ENCODE measurements at regions of chr18 and their contacts with region 1.

Region 1: GRCh38 chr18:58529714-58530354 is 99.1 kb downstream of the ALPK2 start:
- DNase-seq: peak; percentile 40 to 82 (median 72)
- ATAC-seq: peak; percentile 95
- H3K4me3 ChIP-seq: no peak overlapping the region
- H3K4me3 Mint-ChIP-seq: no peak overlapping the region
- H3K27ac ChIP-seq: no peak overlapping the region
- H3K27ac Mint-ChIP-seq: no peak overlapping the region
- H3K4me1 ChIP-seq: no peaks in the 10 kb centered on the region
- H3K4me1 Mint-ChIP-seq: peaks cover 4% of the 10 kb centered on the region
- H3K27me3 ChIP-seq: no peaks in the 10 kb centered on the region
- H3K27me3 Mint-ChIP-seq: peaks cover 7% of the 10 kb centered on the region
- CTCF ChIP-seq: peak; percentile 95

Region 2: DNA sequence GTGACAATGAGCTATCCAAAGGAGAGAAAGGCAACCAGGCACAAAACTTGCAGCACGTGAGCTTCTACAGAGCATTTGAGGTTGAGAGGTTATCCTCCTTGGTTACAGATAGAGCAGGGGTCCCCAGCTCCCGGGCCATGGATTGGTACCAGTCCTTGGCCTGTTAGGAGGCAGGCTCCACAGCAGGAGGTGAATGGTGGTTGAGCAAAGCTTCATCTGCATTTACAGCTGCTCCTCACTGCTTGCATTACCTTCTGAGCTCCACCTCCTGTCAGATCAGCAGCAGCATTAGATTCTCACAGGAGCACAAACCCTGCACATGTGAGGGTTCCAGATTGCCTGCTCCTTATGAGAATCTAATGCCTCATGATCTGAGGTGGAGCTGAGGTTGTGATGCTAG is 1235.3 kb before region 1 on chr18:
- CTCF ChIA-PET with region 1: no interaction called
- POLR2A ChIA-PET with region 1: no interaction called
- intact Hi-C with region 1: no loop called
- DNase-seq: no peak
- ATAC-seq: no peak
- H3K4me3 ChIP-seq: no peak overlapping the region
- H3K4me3 Mint-ChIP-seq: no peak overlapping the region
- H3K27ac ChIP-seq: no peak overlapping the region
- H3K27ac Mint-ChIP-seq: no peak overlapping the region
- H3K4me1 ChIP-seq: no peaks in the 10 kb centered on the region
- H3K4me1 Mint-ChIP-seq: no peaks in the 10 kb centered on the region
- H3K27me3 ChIP-seq: no peaks in the 10 kb centered on the region
- H3K27me3 Mint-ChIP-seq: peaks cover 10% of the 10 kb centered on the region
- CTCF ChIP-seq: no peak

Region 3: DNA sequence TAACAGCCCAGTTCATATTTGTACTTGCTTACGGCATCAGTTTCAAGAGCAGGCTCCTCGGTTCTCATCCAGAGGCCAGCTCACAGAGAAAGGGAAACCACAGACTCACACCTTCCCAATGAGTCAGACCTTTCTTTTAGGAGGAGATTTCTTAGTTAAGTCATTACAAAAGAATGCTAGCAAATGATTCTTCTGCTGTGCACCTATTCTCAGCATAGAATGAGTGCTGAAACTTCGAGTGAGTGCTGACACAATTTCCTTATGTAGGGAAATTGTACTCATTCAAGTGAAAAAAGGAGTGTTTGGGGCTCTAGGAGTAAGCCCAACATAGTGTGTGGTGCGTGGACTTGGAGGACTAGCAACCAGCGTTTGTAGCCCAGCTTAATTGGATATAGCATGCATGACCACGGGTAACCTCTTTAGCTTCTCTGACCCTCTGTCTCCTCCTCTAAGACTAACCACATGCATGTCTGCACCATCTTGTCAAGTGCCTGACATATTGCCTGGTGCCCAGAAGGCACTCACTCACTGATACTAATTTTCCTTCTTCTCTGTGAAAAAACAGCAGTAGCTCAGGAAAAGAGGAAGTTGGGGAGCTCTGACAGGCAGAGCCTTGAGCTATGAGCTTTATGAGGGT is 12.1 kb after region 1 on chr18:
- CTCF ChIA-PET with region 1: interaction called, 14 read pairs
- POLR2A ChIA-PET with region 1: interaction called, 3 read pairs
- intact Hi-C with region 1: no loop called
- DNase-seq: peak in 6 of 9 experiments; percentile 6 to 79 (median 47)
- ATAC-seq: peak; percentile 82
- H3K4me3 ChIP-seq: no peak overlapping the region
- H3K4me3 Mint-ChIP-seq: no peak overlapping the region
- H3K27ac ChIP-seq: no peak overlapping the region
- H3K27ac Mint-ChIP-seq: no peak overlapping the region
- H3K4me1 ChIP-seq: no peaks in the 10 kb centered on the region
- H3K4me1 Mint-ChIP-seq: peaks cover 20% of the 10 kb centered on the region
- H3K27me3 ChIP-seq: no peaks in the 10 kb centered on the region
- H3K27me3 Mint-ChIP-seq: no peaks in the 10 kb centered on the region
- CTCF ChIP-seq: no peak

Region 4: GRCh38 chr18:58716060-58716756 is 186.4 kb after region 1 on chr18:
- CTCF ChIA-PET with region 1: interaction called, 4 read pairs
- POLR2A ChIA-PET with region 1: no interaction called
- intact Hi-C with region 1: loop called in 1 of 2 experiments (anchors 5 kb)
- DNase-seq: peak in 2 of 9 experiments; percentile 44 to 71
- ATAC-seq: peak; percentile 80
- H3K4me3 ChIP-seq: peak overlapping the region in 1 of 2 experiments; percentile 5
- H3K4me3 Mint-ChIP-seq: peak overlapping the region; percentile 73
- H3K27ac ChIP-seq: peak overlapping the region; percentile 7 to 23
- H3K27ac Mint-ChIP-seq: peak overlapping the region; percentile 93
- H3K4me1 ChIP-seq: peaks cover 38% of the 10 kb centered on the region
- H3K4me1 Mint-ChIP-seq: peaks cover 64% of the 10 kb centered on the region
- H3K27me3 ChIP-seq: no peaks in the 10 kb centered on the region
- H3K27me3 Mint-ChIP-seq: no peaks in the 10 kb centered on the region
- CTCF ChIP-seq: no peak

Region 5: GRCh38 chr18:58754544-58755068 is 224.8 kb after region 1 on chr18:
- CTCF ChIA-PET with region 1: interaction called, 18 read pairs
- POLR2A ChIA-PET with region 1: interaction called, 3 read pairs
- intact Hi-C with region 1: no loop called
- DNase-seq: peak in 1 of 9 experiments; percentile 40
- ATAC-seq: peak; percentile 32
- H3K4me3 ChIP-seq: no peak overlapping the region
- H3K4me3 Mint-ChIP-seq: no peak overlapping the region
- H3K27ac ChIP-seq: no peak overlapping the region
- H3K27ac Mint-ChIP-seq: peak overlapping the region; percentile 16
- H3K4me1 ChIP-seq: peaks cover 19% of the 10 kb centered on the region
- H3K4me1 Mint-ChIP-seq: peaks cover 33% of the 10 kb centered on the region
- H3K27me3 ChIP-seq: no peaks in the 10 kb centered on the region
- H3K27me3 Mint-ChIP-seq: no peaks in the 10 kb centered on the region
- CTCF ChIP-seq: no peak

Region 6: GRCh38 chr18:59070181-59070912 is 540.5 kb after region 1 on chr18:
- CTCF ChIA-PET with region 1: interaction called, 5 read pairs
- POLR2A ChIA-PET with region 1: no interaction called
- intact Hi-C with region 1: loop called (anchors 5 kb)
- DNase-seq: peak; percentile 48 to 82 (median 70)
- ATAC-seq: peak; percentile 78
- H3K4me3 ChIP-seq: no peak overlapping the region
- H3K4me3 Mint-ChIP-seq: no peak overlapping the region
- H3K27ac ChIP-seq: no peak overlapping the region
- H3K27ac Mint-ChIP-seq: no peak overlapping the region
- H3K4me1 ChIP-seq: no peaks in the 10 kb centered on the region
- H3K4me1 Mint-ChIP-seq: no peaks in the 10 kb centered on the region
- H3K27me3 ChIP-seq: no peaks in the 10 kb centered on the region
- H3K27me3 Mint-ChIP-seq: peaks cover 2% of the 10 kb centered on the region
- CTCF ChIP-seq: peak; percentile 76